CD8-positive, alpha-beta T cell (primary cell): ENCODE measurements at regions of chrX and their contacts with region 1.

Region 1: GRCh38 chrX:51420610-51421009 is 75.8 kb downstream of the NUDT11 start:
- DNase-seq: peak in 5 of 9 experiments; percentile 11 to 62 (median 36)
- ATAC-seq: peak; percentile 29
- H3K4me3 ChIP-seq: no peak overlapping the region
- H3K4me3 Mint-ChIP-seq: no peak overlapping the region
- H3K27ac ChIP-seq: no peak overlapping the region
- H3K27ac Mint-ChIP-seq: no peak overlapping the region
- H3K4me1 ChIP-seq: no peaks in the 10 kb centered on the region
- H3K4me1 Mint-ChIP-seq: peaks cover 3% of the 10 kb centered on the region
- H3K27me3 ChIP-seq: no peaks in the 10 kb centered on the region
- H3K27me3 Mint-ChIP-seq: no peaks in the 10 kb centered on the region
- CTCF ChIP-seq: peak; percentile 20

Region 2: GRCh38 chrX:51144852-51145442 is 275.7 kb before region 1 on chrX:
- CTCF ChIA-PET with region 1: interaction called, 3 read pairs
- POLR2A ChIA-PET with region 1: no interaction called
- intact Hi-C with region 1: loop called in 1 of 2 experiments (anchors 10 kb)
- DNase-seq: peak in 4 of 9 experiments; percentile 12 to 34 (median 26)
- ATAC-seq: no peak
- H3K4me3 ChIP-seq: no peak overlapping the region
- H3K4me3 Mint-ChIP-seq: no peak overlapping the region
- H3K27ac ChIP-seq: no peak overlapping the region
- H3K27ac Mint-ChIP-seq: no peak overlapping the region
- H3K4me1 ChIP-seq: no peaks in the 10 kb centered on the region
- H3K4me1 Mint-ChIP-seq: no peaks in the 10 kb centered on the region
- H3K27me3 ChIP-seq: no peaks in the 10 kb centered on the region
- H3K27me3 Mint-ChIP-seq: peaks cover 7% of the 10 kb centered on the region
- CTCF ChIP-seq: peak; percentile 27

Region 3: GRCh38 chrX:51336584-51336983 is 84.0 kb before region 1 on chrX:
- CTCF ChIA-PET with region 1: interaction called, 83 read pairs
- POLR2A ChIA-PET with region 1: interaction called, 4 read pairs
- intact Hi-C with region 1: loop called (anchors 1 kb)
- DNase-seq: peak in 5 of 9 experiments; percentile 11 to 57 (median 36)
- ATAC-seq: peak; percentile 80
- H3K4me3 ChIP-seq: no peak overlapping the region
- H3K4me3 Mint-ChIP-seq: no peak overlapping the region
- H3K27ac ChIP-seq: no peak overlapping the region
- H3K27ac Mint-ChIP-seq: no peak overlapping the region
- H3K4me1 ChIP-seq: no peaks in the 10 kb centered on the region
- H3K4me1 Mint-ChIP-seq: peaks cover 7% of the 10 kb centered on the region
- H3K27me3 ChIP-seq: no peaks in the 10 kb centered on the region
- H3K27me3 Mint-ChIP-seq: no peaks in the 10 kb centered on the region
- CTCF ChIP-seq: peak; percentile 48

Region 4: DNA sequence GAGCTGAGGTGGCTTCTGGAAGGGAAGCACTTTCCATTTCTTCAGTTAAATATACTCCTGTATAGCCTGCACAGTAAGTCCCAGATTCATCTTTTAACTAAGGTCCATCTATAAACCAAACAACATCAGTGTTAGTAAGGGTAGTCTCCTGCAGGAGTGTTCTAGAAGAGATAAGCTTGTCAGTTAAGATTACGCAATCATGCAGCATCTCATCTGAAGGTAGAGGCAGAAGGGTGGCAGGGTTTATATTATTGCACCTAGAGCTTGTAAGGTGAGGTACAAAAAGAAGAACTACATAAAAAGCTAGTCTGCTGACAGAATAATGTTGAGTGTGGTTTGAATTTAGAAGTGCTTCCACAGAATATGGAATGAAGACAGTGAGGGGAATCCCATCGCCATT is 43.9 kb before region 1 on chrX:
- CTCF ChIA-PET with region 1: interaction called, 3 read pairs
- POLR2A ChIA-PET with region 1: interaction called, 3 read pairs
- intact Hi-C with region 1: loop called in 1 of 2 experiments (anchors 5 kb)
- DNase-seq: no peak
- ATAC-seq: no peak
- H3K4me3 ChIP-seq: no peak overlapping the region
- H3K4me3 Mint-ChIP-seq: no peak overlapping the region
- H3K27ac ChIP-seq: no peak overlapping the region
- H3K27ac Mint-ChIP-seq: no peak overlapping the region
- H3K4me1 ChIP-seq: no peaks in the 10 kb centered on the region
- H3K4me1 Mint-ChIP-seq: peaks cover 19% of the 10 kb centered on the region
- H3K27me3 ChIP-seq: no peaks in the 10 kb centered on the region
- H3K27me3 Mint-ChIP-seq: no peaks in the 10 kb centered on the region
- CTCF ChIP-seq: no peak